Dendritic cell treated with granulocyte-macrophage colony-stimulating factor and Interleukin-4, amounts not matched to agents 40 ng/mL and 50 ng/mL, for 4 days (primary cell): ENCODE measurements at regions of chr6 and their contacts with region 1.

Region 1: GRCh38 chr6:42043787-42044475 is 6.4 kb upstream of the TAF8 start:
- H3K4me3 Mint-ChIP-seq: no peak overlapping the region
- H3K27ac Mint-ChIP-seq: no peak overlapping the region
- H3K4me1 Mint-ChIP-seq: peaks cover 57% of the 10 kb centered on the region
- H3K27me3 Mint-ChIP-seq: peaks cover 13% of the 10 kb centered on the region

Region 2: GRCh38 chr6:41602864-41603608 is 440.9 kb before region 1 on chr6:
- intact Hi-C with region 1: loop called (anchors 10 kb)
- H3K4me3 Mint-ChIP-seq: no peak overlapping the region
- H3K27ac Mint-ChIP-seq: no peak overlapping the region
- H3K4me1 Mint-ChIP-seq: no peaks in the 10 kb centered on the region
- H3K27me3 Mint-ChIP-seq: peaks cover 5% of the 10 kb centered on the region

Region 3: GRCh38 chr6:41713161-41713649 is 330.7 kb before region 1 on chr6:
- intact Hi-C with region 1: no loop called
- H3K4me3 Mint-ChIP-seq: no peak overlapping the region
- H3K27ac Mint-ChIP-seq: peak overlapping the region; percentile 23
- H3K4me1 Mint-ChIP-seq: peaks cover 81% of the 10 kb centered on the region
- H3K27me3 Mint-ChIP-seq: no peaks in the 10 kb centered on the region

Region 4: DNA sequence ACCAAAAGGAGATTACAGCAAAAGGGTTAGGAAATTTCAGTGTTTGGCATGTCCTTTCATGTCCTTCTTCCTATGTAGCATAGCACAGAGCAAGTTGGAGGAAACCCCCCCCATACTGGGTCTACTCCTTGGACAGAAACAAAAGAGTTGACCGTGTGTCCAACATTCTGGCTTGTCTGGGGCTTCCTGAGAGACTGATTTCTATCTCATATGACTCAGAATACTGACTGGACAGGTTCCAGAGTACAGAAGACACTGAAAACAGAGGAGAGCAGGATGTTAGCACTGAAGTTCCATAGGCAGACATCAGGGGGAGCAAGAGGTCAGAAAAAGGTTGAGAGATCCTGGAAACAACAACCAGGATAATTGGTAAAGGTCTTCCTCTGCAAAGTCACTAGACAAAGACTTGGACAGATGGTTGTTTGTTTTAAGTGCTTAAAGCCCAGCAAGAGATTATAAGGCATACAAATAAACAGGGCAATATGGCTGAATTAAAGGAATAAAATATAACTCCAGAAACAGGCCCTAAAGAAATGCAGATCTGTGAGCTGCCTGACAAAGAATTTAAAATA is 197.2 kb before region 1 on chr6:
- intact Hi-C with region 1: loop called (anchors 1 kb)
- H3K4me3 Mint-ChIP-seq: no peak overlapping the region
- H3K27ac Mint-ChIP-seq: no peak overlapping the region
- H3K4me1 Mint-ChIP-seq: no peaks in the 10 kb centered on the region
- H3K27me3 Mint-ChIP-seq: no peaks in the 10 kb centered on the region

Region 5: GRCh38 chr6:41901882-41902519 is 141.9 kb before region 1 on chr6:
- intact Hi-C with region 1: loop called (anchors 1 kb)
- H3K4me3 Mint-ChIP-seq: no peak overlapping the region
- H3K27ac Mint-ChIP-seq: no peak overlapping the region
- H3K4me1 Mint-ChIP-seq: no peaks in the 10 kb centered on the region
- H3K27me3 Mint-ChIP-seq: no peaks in the 10 kb centered on the region

Region 6: DNA sequence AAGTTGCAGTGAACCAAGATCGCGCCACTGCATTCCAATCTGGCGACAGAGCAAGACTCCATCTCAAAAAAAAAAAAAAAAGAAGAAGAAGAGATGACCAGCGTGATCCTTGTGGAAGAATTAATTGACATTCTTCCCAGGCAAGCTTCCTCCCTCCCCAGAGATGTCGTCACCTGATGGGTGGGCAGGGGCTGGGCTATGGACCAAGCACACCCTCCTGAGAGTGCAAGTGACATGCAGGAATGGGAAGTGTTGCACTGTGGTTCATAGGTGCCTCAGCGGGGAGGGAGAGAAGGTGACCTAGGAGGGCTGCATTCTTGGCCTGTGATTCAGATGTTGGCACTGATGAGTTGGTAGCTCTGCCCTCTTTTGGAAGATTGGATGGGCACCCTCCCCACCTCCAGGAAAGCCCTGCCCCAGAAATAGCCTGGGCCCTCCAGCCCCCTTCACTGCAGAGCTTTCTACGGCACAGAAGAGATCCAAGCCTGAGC is 44.2 kb after region 1 on chr6:
- intact Hi-C with region 1: no loop called
- H3K4me3 Mint-ChIP-seq: no peak overlapping the region
- H3K27ac Mint-ChIP-seq: no peak overlapping the region
- H3K4me1 Mint-ChIP-seq: no peaks in the 10 kb centered on the region
- H3K27me3 Mint-ChIP-seq: peaks cover 1% of the 10 kb centered on the region

Region 7: DNA sequence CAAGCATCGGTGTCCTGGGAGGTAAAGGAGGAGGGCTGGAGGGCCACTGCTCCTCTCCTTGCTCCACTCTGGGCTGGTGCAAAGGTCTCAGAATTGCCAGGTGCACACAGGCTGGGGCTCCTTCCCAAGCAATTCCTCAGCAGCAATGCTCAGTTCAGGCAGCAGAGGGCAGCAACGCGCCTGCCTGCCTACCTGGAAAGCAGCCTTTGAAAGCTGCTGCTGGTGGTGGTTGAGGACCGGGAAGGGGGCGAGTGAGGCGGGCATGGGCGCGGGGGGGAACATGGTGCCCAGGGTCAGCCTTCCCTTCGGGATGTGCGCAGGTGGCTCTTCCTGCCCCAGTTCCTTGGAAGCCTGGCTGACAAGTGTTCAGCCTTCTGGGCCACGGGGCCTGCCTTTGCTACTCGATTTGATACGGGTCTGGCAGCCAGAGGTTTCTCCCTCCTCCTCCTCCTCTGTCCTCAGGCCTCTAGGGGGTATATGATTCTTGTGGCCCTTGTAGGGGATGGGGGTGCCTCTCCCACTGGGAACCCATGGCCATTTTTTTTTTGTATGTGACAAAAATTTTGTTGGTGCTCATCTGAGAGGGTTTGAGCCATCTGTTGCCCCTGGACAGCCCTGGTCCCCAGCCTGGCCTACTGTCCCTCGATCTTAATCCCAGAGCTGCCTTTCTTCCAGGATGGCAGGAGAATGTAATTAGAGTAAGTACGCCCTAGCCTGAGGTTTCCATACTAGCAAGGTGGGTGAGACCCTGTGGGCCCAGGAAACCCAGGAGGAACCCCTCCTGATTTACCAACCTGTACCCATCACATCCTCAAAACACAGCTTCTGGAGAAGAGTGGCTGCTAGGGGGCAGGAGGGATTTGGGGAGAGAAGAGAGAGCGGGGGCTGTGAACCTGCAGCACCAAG is 1623.6 kb after region 1 on chr6:
- intact Hi-C with region 1: no loop called
- H3K4me3 Mint-ChIP-seq: no peak overlapping the region
- H3K27ac Mint-ChIP-seq: no peak overlapping the region
- H3K4me1 Mint-ChIP-seq: peaks cover 28% of the 10 kb centered on the region
- H3K27me3 Mint-ChIP-seq: peaks cover 32% of the 10 kb centered on the region